Esophagus squamous epithelium (tissue), 5 donors: ENCODE measurements at regions of chr1 and their contacts with region 1.

Region 1: DNA sequence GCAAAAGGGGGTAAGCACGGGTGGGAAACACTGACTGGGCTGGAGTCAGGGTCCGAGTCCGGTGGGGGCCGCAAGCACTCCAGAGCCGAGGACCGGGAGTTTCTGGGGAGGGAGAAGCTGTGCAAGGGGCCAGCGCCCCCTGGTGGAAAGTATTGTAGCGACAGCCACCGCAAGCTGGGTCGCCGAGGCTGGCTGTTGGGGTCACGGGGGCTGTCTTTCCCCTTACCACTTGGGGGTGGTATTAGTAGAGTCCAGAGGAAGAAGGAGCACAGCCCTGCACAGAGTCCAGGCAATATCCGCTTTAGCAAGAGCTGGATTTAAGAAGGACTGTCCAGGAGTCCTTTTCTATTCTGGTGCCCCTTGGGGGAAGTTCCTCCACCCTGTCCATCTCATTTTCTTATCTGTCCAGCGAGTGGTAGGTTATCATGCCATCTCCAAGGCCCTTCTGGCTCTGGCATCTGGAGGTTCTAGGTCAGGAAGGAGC is 17.9 kb upstream of the ETV3 start:
- DNase-seq: no peak
- H3K4me3 ChIP-seq: peak overlapping the region in 1 of 4 donors; percentile 45
- H3K27ac ChIP-seq: peak overlapping the region in 2 of 4 donors; percentile 10 to 25
- H3K4me1 ChIP-seq: peaks cover 29 to 45% (median 39%) of the 10 kb centered on the region in 3 donors
- H3K27me3 ChIP-seq: peaks cover 0 to 7% (median 0%) of the 10 kb centered on the region in 4 donors
- CTCF ChIP-seq: peak; percentile 95 to 99 (median 97)
- POLR2A ChIP-seq: no peak

Region 2: GRCh38 chr1:156884560-156885184 is 271.4 kb before region 1 on chr1:
- intact Hi-C with region 1: no loop called
- DNase-seq: no peak
- H3K4me3 ChIP-seq: no peak overlapping the region
- H3K27ac ChIP-seq: no peak overlapping the region
- H3K4me1 ChIP-seq: no peaks in the 10 kb centered on the region
- H3K27me3 ChIP-seq: peaks cover 0 to 80% (median 0%) of the 10 kb centered on the region in 4 donors
- CTCF ChIP-seq: no peak
- POLR2A ChIP-seq: no peak

Region 3: GRCh38 chr1:157090196-157090647 is 65.9 kb before region 1 on chr1:
- intact Hi-C with region 1: loop called (anchors 2 kb)
- DNase-seq: no peak
- H3K4me3 ChIP-seq: no peak overlapping the region
- H3K27ac ChIP-seq: no peak overlapping the region
- H3K4me1 ChIP-seq: peaks cover 0 to 15% (median 3%) of the 10 kb centered on the region in 3 donors
- H3K27me3 ChIP-seq: no peaks in the 10 kb centered on the region
- CTCF ChIP-seq: peak; percentile 66 to 98 (median 94)
- POLR2A ChIP-seq: no peak